MCF 10A (cell line): ENCODE measurements at regions of chr12 and their contacts with region 1.

Region 1: DNA sequence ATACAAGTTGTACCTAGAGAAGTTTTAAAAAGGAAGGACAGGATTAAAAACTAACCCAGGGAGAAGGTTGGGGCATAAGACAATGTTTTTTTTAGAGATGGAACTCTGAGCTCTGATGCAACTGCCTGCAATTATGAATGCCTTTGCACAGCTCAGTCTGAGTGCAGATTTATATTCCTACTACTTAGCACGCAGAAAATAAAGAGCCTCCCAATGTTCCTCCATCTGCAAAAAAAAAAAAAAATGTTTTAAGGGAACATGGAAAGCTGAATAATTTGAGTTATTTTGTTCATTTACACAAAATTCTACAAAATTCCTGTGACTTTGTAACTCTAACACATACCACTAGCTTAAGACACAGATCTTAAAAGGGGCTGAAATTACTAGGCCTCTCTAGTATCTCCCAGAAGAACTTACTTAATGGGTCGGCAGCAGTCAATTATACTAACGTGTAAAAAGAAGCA is 15.7 kb downstream of the CLIP1 start:
- DNase-seq: no peak
- H3K4me3 Mint-ChIP-seq: no peak overlapping the region
- H3K27ac Mint-ChIP-seq: peak overlapping the region; percentile 83
- H3K4me1 Mint-ChIP-seq: peaks cover 19% of the 10 kb centered on the region
- H3K27me3 Mint-ChIP-seq: no peaks in the 10 kb centered on the region
- CTCF ChIP-seq: no peak

Region 2: DNA sequence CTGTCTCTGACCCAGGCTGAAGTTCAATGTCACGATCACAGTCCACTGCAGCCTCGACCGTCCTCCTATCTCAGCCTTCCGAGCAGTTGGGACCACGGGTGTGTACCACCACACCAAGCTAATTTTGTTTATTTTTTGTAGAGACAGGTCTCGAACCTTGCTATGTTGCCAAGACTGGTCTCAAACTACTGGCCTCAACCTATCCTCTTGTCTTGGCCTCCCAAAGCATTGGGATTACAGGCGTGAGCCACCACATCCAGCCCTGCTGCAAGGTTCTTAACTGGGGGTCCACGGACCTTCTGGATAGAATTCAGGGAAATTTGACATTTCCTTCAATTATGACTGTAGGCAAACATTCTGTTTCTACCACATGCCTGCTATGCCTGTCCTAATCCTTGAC is 57.1 kb after region 1 on chr12:
- CTCF ChIA-PET with region 1: no interaction called
- POLR2A ChIA-PET with region 1: interaction called, 292 read pairs
- intact Hi-C with region 1: no loop called
- DNase-seq: no peak
- H3K4me3 Mint-ChIP-seq: no peak overlapping the region
- H3K27ac Mint-ChIP-seq: peak overlapping the region; percentile 91
- H3K4me1 Mint-ChIP-seq: no peaks in the 10 kb centered on the region
- H3K27me3 Mint-ChIP-seq: no peaks in the 10 kb centered on the region
- CTCF ChIP-seq: no peak